ENCODE measurements at regions of chr15 and their contacts with region 1.

Region 1: DNA sequence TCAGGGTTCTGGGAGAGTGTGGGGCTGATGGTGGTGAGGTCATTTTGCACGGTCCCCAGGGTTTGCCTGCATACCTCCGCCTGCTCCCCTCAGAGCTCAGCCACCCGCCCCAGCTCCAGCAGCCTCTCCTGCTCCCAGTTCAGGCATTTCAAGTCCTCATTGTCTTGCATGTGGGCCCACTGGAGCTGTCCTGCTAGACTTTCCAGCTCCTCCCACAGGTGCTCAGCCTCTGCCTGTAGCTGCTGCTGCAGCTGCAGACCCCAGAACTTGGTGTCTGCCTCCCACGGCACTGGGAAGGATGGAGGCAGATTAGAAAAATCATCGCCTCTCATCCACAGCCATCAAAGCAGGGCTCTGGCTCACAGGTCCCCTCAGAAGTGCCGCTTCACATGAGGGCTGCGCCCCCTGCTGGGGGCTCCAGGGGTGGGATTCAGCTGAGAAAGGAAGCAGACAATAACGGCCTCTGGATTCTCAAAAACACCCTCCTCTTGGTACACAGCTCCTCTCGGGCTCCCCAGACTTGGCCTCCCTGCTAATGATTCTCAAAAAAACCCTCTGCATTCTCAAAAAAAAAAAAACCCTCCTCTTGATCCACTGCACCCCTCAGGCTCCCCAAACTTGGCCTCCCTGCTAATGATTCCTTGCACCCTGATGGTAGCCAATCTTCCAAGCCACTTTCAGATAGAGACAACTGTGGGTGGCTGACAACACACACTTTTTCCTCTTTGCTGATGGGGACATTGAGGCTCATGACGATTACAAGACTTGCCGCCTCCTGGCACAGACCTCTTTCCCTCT is 89.3 kb upstream of the C2CD4B start:
- DNase-seq: peak; percentile 72
- ATAC-seq: peak; percentile 69
- H3K4me3 Mint-ChIP-seq: no peak overlapping the region
- H3K27ac Mint-ChIP-seq: no peak overlapping the region
- H3K4me1 Mint-ChIP-seq: no peaks in the 10 kb centered on the region
- H3K27me3 Mint-ChIP-seq: peaks cover 2% of the 10 kb centered on the region

Region 2: GRCh38 chr15:62087671-62088352 is 166.5 kb before region 1 on chr15:
- CTCF ChIA-PET with region 1: no interaction called
- POLR2A ChIA-PET with region 1: no interaction called
- DNase-seq: no peak
- ATAC-seq: no peak
- H3K4me3 Mint-ChIP-seq: no peak overlapping the region
- H3K27ac Mint-ChIP-seq: no peak overlapping the region
- H3K4me1 Mint-ChIP-seq: peaks cover 1% of the 10 kb centered on the region
- H3K27me3 Mint-ChIP-seq: peaks cover 2% of the 10 kb centered on the region

Region 3: GRCh38 chr15:62124176-62124972 is 130.0 kb before region 1 on chr15:
- CTCF ChIA-PET with region 1: interaction called, 11 read pairs
- POLR2A ChIA-PET with region 1: no interaction called
- DNase-seq: no peak
- ATAC-seq: peak; percentile 19
- H3K4me3 Mint-ChIP-seq: no peak overlapping the region
- H3K27ac Mint-ChIP-seq: peak overlapping the region; percentile 53
- H3K4me1 Mint-ChIP-seq: peaks cover 50% of the 10 kb centered on the region
- H3K27me3 Mint-ChIP-seq: peaks cover 5% of the 10 kb centered on the region

Region 4: GRCh38 chr15:62464705-62465104 is 210.4 kb after region 1 on chr15:
- CTCF ChIA-PET with region 1: no interaction called
- POLR2A ChIA-PET with region 1: no interaction called
- DNase-seq: no peak
- ATAC-seq: no peak
- H3K4me3 Mint-ChIP-seq: no peak overlapping the region
- H3K27ac Mint-ChIP-seq: no peak overlapping the region
- H3K4me1 Mint-ChIP-seq: no peaks in the 10 kb centered on the region
- H3K27me3 Mint-ChIP-seq: peaks cover 2% of the 10 kb centered on the region